Activated CD8-positive, alpha-beta T cell treated with anti-CD3 and anti-CD28 coated beads for 36 hours (primary cell): ENCODE measurements at regions of chr2 and their contacts with region 1.

Region 1: GRCh38 chr2:65064728-65065552 is 8.7 kb downstream of the CEP68 start:
- DNase-seq: peak; percentile 70
- ATAC-seq: peak; percentile 89
- H3K4me3 Mint-ChIP-seq: no peak overlapping the region
- H3K27ac Mint-ChIP-seq: peak overlapping the region; percentile 82
- H3K4me1 Mint-ChIP-seq: peaks cover 40% of the 10 kb centered on the region
- H3K27me3 Mint-ChIP-seq: no peaks in the 10 kb centered on the region
- CTCF ChIP-seq: peak; percentile 80

Region 2: GRCh38 chr2:64914735-64915509 is 150.0 kb before region 1 on chr2:
- CTCF ChIA-PET with region 1: interaction called, 15 read pairs
- POLR2A ChIA-PET with region 1: no interaction called
- intact Hi-C with region 1: no loop called
- DNase-seq: no peak
- ATAC-seq: no peak
- H3K4me3 Mint-ChIP-seq: no peak overlapping the region
- H3K27ac Mint-ChIP-seq: no peak overlapping the region
- H3K4me1 Mint-ChIP-seq: peaks cover 28% of the 10 kb centered on the region
- H3K27me3 Mint-ChIP-seq: no peaks in the 10 kb centered on the region
- CTCF ChIP-seq: no peak

Region 3: DNA sequence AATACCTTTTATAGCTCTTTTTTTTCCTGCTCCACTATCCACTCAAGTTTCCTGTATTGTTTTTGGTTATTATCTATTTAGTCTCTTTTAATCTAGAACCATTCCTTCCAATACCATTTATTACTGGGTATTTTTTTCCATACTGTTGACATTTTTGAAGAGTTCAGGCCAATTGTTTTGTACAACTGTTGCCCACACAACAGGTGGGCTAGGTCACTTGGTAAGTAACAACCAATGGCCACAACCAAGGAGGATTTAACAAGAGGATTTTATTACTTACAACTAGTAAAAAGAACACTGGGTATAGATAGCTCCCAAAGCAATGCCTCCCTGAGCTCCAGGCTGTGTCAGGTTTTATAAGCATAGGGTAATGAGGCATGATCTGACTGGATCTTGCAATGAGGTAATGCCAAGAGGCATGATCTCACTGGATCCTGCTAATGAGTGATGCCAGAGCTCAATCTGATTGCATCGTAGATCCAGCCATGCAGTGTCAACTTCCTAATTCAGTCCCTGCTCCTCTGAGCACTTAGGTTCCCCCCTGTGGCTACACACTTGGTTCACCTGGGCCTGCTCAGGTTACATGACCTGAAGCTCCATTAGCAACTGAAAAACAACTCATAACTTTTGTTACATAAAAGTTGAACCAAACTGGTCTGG is 15.8 kb before region 1 on chr2:
- CTCF ChIA-PET with region 1: interaction called, 37 read pairs
- POLR2A ChIA-PET with region 1: interaction called, 3 read pairs
- intact Hi-C with region 1: no loop called
- DNase-seq: peak; percentile 36
- ATAC-seq: peak; percentile 37
- H3K4me3 Mint-ChIP-seq: no peak overlapping the region
- H3K27ac Mint-ChIP-seq: no peak overlapping the region
- H3K4me1 Mint-ChIP-seq: peaks cover 20% of the 10 kb centered on the region
- H3K27me3 Mint-ChIP-seq: no peaks in the 10 kb centered on the region
- CTCF ChIP-seq: no peak

Region 4: GRCh38 chr2:65085148-65085547 is 20.2 kb after region 1 on chr2:
- CTCF ChIA-PET with region 1: interaction called, 25 read pairs
- POLR2A ChIA-PET with region 1: no interaction called
- intact Hi-C with region 1: no loop called
- DNase-seq: no peak
- ATAC-seq: no peak
- H3K4me3 Mint-ChIP-seq: no peak overlapping the region
- H3K27ac Mint-ChIP-seq: no peak overlapping the region
- H3K4me1 Mint-ChIP-seq: peaks cover 22% of the 10 kb centered on the region
- H3K27me3 Mint-ChIP-seq: no peaks in the 10 kb centered on the region
- CTCF ChIP-seq: no peak

Region 5: DNA sequence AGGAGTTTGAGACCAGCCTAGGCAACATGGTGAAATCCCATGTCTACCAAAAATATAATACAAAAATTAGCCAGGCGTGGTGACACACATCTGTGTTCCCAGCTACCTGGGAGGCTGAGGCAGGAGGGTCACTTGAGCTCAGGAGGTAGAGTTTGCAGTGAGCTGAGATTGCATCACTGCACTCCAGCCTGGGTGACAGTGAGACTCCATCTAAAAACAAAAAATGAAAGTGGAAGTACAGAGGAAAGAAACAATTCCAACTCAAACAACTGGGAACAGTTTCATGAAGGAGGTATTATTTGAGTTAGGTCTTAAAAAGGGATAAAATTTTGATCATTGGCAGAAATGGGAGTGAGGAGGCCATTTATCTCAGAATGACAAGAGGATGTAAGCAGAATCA is 71.3 kb after region 1 on chr2:
- CTCF ChIA-PET with region 1: interaction called, 23 read pairs
- POLR2A ChIA-PET with region 1: interaction called, 3 read pairs
- intact Hi-C with region 1: no loop called
- DNase-seq: no peak
- ATAC-seq: no peak
- H3K4me3 Mint-ChIP-seq: no peak overlapping the region
- H3K27ac Mint-ChIP-seq: no peak overlapping the region
- H3K4me1 Mint-ChIP-seq: peaks cover 1% of the 10 kb centered on the region
- H3K27me3 Mint-ChIP-seq: no peaks in the 10 kb centered on the region
- CTCF ChIP-seq: no peak

Region 6: DNA sequence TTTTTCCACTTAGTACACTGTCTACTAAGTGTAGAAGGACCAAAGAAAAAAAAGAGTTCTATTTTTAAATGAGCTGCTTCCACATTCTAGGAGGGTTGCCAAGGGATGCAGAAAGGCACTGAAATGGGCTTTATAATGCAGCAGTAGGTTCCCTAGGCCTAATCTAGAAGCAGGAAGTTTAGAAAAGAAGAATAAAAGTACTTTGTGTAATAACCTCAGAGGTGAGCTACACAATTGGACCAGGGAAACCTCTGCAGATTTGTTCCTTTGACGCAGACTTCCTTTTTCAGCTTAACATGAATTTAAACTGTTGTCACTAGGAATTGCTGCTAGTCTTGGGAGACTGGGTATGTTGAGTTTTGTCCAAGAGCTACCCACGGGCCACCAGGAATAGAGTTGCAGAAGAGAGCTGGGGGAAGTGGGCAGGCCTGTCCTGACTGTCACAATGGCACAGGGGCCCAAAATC is 99.5 kb after region 1 on chr2:
- CTCF ChIA-PET with region 1: interaction called, 105 read pairs
- POLR2A ChIA-PET with region 1: no interaction called
- intact Hi-C with region 1: loop called (anchors 5 kb)
- DNase-seq: no peak
- ATAC-seq: no peak
- H3K4me3 Mint-ChIP-seq: no peak overlapping the region
- H3K27ac Mint-ChIP-seq: no peak overlapping the region
- H3K4me1 Mint-ChIP-seq: peaks cover 21% of the 10 kb centered on the region
- H3K27me3 Mint-ChIP-seq: no peaks in the 10 kb centered on the region
- CTCF ChIP-seq: no peak

Region 7: DNA sequence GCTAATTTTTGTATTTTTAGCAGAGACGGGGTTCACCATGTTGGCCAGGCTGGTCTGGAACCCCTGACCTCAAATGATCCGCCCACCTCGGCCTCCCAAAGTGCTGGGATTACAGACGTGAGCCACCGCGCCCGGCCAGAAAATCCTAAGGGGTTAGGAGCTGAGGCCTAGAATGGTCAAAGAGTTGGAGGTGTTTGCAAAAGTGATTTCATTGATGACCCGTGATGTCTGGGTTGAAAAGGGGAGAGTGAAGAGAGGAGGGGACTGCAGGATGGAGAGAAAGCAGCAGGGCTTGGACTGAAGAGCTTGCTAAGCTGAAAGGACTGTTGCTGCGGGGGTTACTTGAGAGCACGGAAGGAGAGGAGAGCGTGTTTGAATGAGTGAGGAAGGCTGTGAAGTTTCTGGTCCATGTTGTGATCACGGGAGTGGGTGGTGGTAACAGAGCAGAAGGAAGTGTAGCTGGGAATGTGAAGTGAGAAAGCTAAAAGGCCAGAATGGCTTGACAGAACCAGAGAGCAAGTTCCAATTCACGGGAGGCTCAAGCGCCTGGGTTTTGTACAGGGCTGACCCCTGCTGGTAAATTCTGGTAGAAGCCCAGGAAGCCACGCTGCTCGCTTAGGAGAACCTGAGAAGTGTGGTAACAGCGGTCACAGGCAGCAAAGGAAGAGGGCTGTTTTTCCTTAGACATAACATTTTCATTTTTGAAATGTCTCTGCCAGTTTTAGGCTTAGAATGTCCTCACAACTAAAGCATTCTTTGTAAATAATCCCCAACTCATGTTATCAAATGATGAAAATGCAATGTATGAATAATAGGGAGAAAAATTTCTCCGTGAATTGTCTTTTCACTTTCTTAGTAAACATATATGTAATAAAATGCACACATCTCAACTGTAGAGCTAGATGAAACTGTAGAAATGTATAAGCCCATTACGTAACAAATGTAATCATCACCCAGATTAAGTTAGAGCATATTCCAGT is 122.2 kb after region 1 on chr2:
- CTCF ChIA-PET with region 1: interaction called, 35 read pairs
- POLR2A ChIA-PET with region 1: no interaction called
- intact Hi-C with region 1: no loop called
- DNase-seq: peak; percentile 75
- ATAC-seq: peak; percentile 90
- H3K4me3 Mint-ChIP-seq: no peak overlapping the region
- H3K27ac Mint-ChIP-seq: no peak overlapping the region
- H3K4me1 Mint-ChIP-seq: peaks cover 4% of the 10 kb centered on the region
- H3K27me3 Mint-ChIP-seq: no peaks in the 10 kb centered on the region
- CTCF ChIP-seq: peak; percentile 74